Activated CD4-positive, alpha-beta T cell treated with anti-CD3 and anti-CD28 coated beads, Interleukin-2, amount 10 ng/mL, durations not matched to agents 24 days and 14 days (primary cell): ENCODE measurements at regions of chr19 and their contacts with region 1.

Region 1: DNA sequence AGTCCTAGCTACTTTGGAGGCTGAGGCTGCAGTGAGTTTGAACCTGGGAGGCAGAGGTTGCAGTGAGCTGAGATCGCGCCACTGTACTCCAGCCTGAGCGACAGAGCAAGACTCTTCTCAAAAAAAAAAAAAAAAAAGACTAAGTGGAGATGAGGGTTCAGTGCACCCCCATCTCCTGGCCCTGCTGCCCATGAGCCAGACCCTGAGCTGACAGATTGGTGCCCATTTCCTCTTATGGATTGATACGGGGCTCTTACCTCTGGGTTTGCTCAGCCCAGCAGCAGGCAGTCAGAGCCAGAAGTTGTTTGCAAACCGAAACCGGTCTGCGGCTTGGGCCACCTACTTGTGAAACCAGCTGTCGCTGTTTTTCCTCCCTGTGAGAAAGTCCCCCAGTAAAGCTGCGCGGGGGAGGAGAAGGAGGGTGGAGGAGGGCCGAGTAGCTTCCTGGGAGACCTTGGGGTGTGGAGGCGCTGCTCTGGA is 36.9 kb downstream of the ARRDC2 start:
- DNase-seq: peak; percentile 96
- H3K4me3 Mint-ChIP-seq: peak overlapping the region; percentile 79
- H3K27ac Mint-ChIP-seq: peak overlapping the region; percentile 93
- H3K4me1 Mint-ChIP-seq: peaks cover 38% of the 10 kb centered on the region
- H3K27me3 Mint-ChIP-seq: peaks cover 3% of the 10 kb centered on the region

Region 2: GRCh38 chr19:18007044-18007916 is 37.6 kb before region 1 on chr19:
- intact Hi-C with region 1: loop called (anchors 1 kb)
- DNase-seq: peak; percentile 96
- H3K4me3 Mint-ChIP-seq: peak overlapping the region; percentile 92
- H3K27ac Mint-ChIP-seq: peak overlapping the region; percentile 93
- H3K4me1 Mint-ChIP-seq: peaks cover 33% of the 10 kb centered on the region
- H3K27me3 Mint-ChIP-seq: no peaks in the 10 kb centered on the region

Region 3: GRCh38 chr19:18021121-18021755 is 23.6 kb before region 1 on chr19:
- intact Hi-C with region 1: loop called (anchors 1 kb)
- DNase-seq: peak; percentile 88
- H3K4me3 Mint-ChIP-seq: peak overlapping the region; percentile 94
- H3K27ac Mint-ChIP-seq: peak overlapping the region; percentile 98
- H3K4me1 Mint-ChIP-seq: peaks cover 60% of the 10 kb centered on the region
- H3K27me3 Mint-ChIP-seq: no peaks in the 10 kb centered on the region

Region 4: DNA sequence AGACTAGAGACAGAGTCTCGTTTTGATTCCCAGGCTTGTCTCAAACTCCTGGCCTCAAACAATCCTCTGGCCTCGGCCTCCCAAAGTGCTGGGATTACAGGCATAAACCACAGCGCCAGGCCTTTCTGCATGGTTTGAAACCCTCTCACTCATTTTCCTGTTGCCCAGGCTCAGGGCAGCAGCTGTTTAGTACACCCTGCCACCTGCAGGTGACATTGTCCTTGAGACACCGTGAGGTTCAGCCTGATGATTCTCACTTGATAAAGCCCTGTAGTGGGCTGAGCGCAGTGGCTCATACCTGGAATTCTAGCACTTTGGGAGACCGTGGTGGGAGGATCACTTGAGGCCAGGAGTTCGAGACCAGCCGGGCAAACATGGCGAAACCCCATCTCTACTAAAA is 29.3 kb after region 1 on chr19:
- intact Hi-C with region 1: no loop called
- DNase-seq: no peak
- H3K4me3 Mint-ChIP-seq: no peak overlapping the region
- H3K27ac Mint-ChIP-seq: no peak overlapping the region
- H3K4me1 Mint-ChIP-seq: peaks cover 8% of the 10 kb centered on the region
- H3K27me3 Mint-ChIP-seq: no peaks in the 10 kb centered on the region

Region 5: GRCh38 chr19:18274781-18275356 is 230.0 kb after region 1 on chr19:
- intact Hi-C with region 1: no loop called
- DNase-seq: peak; percentile 77
- H3K4me3 Mint-ChIP-seq: peak overlapping the region; percentile 10
- H3K27ac Mint-ChIP-seq: no peak overlapping the region
- H3K4me1 Mint-ChIP-seq: peaks cover 31% of the 10 kb centered on the region
- H3K27me3 Mint-ChIP-seq: peaks cover 1% of the 10 kb centered on the region